HepG2 (cell line): ENCODE measurements at regions of chr17 and their contacts with region 1.

Region 1: DNA sequence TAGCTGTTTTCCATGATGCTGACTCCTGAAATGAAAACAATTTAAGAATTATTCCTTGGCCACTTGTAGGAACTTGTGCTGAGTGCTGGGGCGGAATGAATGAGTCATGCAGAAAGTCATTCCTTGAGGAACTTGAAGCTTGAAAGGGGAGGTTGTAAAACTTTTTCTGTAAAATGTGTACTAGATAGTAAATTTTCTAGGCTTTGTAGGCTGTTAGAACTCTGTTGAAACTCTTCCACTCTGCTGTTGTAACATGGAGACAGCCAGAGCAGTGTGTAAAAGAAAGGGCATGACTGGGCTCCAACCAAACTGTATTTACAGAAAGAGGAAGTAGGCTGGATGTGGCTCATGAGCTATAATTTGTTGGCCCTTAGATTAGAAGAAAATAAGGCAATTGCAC is 46.1 kb downstream of the ABCA8 start:
- DNase-seq: peak; percentile 16
- ATAC-seq: no peak
- H3K4me3 ChIP-seq: no peak overlapping the region
- H3K27ac ChIP-seq: peak overlapping the region; percentile 72
- H3K4me1 ChIP-seq: peaks cover 54% of the 10 kb centered on the region
- H3K27me3 ChIP-seq: no peaks in the 10 kb centered on the region
- CTCF ChIP-seq: no peak
- EP300 ChIP-seq: no peak
- POLR2A ChIP-seq: no peak
- RAD21 ChIP-seq: no peak

Region 2: DNA sequence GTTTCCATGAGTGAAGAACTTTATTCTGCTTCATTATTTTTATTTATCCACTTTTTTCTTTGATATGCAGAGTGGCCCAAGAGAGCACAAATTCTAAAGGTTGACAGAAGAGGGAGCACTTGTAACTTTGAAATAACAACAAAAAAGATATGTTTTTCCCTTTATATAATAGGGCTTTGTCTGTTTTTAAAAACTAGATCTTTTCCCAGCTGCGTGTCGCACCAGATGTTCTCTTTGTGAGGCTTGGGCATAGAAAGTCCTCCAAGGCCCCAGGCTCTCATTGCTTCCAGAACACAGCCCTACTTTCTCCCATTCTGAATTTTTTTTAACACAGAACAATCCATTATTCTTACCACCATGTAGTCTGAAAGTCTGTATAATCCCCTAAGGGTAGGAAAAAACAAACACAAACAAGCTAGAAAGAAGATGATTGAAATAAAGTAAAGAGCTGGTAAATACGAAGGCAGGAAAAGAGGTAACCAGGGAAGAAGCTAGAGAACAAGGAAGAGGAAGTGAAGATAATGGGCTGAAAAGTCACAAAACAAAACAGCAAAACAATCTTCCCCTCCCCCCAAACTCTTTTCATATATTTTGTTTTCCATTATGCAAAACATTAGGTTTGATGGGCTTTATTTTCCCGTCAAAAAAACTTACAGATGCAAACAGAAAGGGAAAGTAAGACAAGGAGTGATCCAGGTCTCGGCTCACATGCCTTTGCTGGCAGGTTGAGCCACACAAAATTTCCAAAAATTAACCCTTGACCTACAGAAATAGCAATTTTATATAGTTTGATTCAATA is 114.2 kb before region 1 on chr17:
- CTCF ChIA-PET with region 1: no interaction called
- POLR2A ChIA-PET with region 1: interaction called, 4 read pairs
- in situ Hi-C with region 1: no loop called
- intact Hi-C with region 1: loop called (anchors 1 kb)
- DNase-seq: peak; percentile 41
- ATAC-seq: no peak; the same call in 2 of the 3 replicates
- H3K4me3 ChIP-seq: no peak overlapping the region
- H3K27ac ChIP-seq: peak overlapping the region; percentile 97
- H3K4me1 ChIP-seq: peaks cover 62% of the 10 kb centered on the region
- H3K27me3 ChIP-seq: no peaks in the 10 kb centered on the region
- CTCF ChIP-seq: no peak
- EP300 ChIP-seq: no peak
- POLR2A ChIP-seq: no peak
- RAD21 ChIP-seq: no peak

Region 3: DNA sequence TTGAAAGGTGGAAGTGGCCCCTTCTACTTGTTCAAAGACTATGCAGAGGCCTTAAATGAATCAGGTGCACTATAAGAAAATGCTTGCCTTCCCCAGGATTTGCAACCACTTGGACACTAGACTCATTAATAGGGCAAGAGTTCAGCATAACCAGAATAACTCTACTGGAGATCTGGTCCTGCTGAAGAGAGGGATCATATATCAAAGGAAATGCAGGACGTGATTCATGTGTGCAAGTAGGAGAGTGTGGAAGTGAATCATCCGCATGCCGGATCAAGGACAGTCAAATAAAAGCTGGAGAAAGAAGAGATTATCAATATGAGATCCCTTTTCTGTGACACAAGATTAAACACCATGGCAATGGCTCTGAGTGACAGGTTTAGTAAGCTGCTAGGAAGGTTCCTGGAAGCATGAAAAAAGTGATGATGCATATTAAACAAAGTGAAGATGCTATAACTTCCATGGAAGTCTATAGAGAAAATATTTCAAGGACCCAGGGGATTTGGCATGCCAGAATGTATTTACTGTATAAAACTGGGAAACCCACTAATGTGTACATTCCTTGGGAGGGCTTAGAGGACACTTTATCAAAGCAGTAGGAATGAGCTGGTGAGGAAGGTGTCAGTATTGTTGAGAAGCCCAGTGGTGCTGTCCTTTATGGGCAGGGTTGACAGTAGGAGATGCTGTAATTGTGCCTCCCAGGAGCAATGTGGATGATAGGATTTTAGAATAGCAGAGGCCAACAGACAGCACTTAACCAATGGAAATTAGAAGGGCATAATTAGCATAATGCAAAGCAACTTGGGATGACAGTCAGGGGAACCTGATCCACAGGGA is 87.0 kb before region 1 on chr17:
- CTCF ChIA-PET with region 1: no interaction called
- POLR2A ChIA-PET with region 1: interaction called, 8 read pairs
- in situ Hi-C with region 1: no loop called
- intact Hi-C with region 1: loop called (anchors 2 kb)
- DNase-seq: peak; percentile 99
- ATAC-seq: peak; percentile 85
- H3K4me3 ChIP-seq: peak overlapping the region in 2 of 3 experiments; percentile 53 to 57; a peak in 3 of 6 replicates
- H3K27ac ChIP-seq: peak overlapping the region; percentile 91
- H3K4me1 ChIP-seq: peaks cover 79% of the 10 kb centered on the region
- H3K27me3 ChIP-seq: no peaks in the 10 kb centered on the region
- CTCF ChIP-seq: no peak
- EP300 ChIP-seq: peak; percentile 81 to 97; a peak in 3 of 4 replicates
- POLR2A ChIP-seq: no peak
- RAD21 ChIP-seq: no peak

Region 4: DNA sequence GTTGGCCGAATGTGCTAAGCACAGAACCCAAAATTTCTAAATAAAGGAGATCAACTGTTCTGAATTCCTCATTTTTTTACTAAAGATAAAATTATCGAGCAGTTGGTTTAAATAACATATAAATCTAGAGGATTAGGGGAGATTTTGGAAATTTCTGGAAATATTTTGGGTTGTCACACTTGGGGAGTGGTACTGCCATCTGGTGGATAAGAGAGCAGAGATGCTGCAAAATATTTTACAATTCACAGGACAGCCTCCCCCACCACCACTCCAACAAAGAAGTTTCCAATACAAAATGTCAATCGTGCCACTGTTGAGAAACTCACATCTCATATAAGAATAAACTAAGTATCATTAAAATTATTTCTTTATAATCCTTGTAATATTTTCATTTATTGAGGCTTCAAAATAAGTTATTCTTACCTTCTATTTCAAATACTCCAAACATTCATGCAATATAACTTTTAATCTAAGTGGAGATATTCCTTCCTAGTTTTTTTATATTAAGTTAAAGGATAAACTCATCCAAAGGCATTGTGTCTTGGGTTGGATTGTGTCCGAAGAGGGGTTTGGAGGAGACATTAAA is 63.1 kb after region 1 on chr17:
- CTCF ChIA-PET with region 1: no interaction called
- POLR2A ChIA-PET with region 1: no interaction called
- in situ Hi-C with region 1: no loop called
- intact Hi-C with region 1: loop called (anchors 2 kb)
- DNase-seq: peak; percentile 43
- ATAC-seq: no peak
- H3K4me3 ChIP-seq: no peak overlapping the region
- H3K27ac ChIP-seq: no peak overlapping the region
- H3K4me1 ChIP-seq: 0 out of 2 replicates have a peak, but pooled peaks cover 10% of the 10 kb centered on the region
- H3K27me3 ChIP-seq: no peaks in the 10 kb centered on the region
- CTCF ChIP-seq: peak; percentile 73
- EP300 ChIP-seq: peak in 1 of 2 experiments; percentile 38; a peak in 1 of 4 replicates
- POLR2A ChIP-seq: no peak
- RAD21 ChIP-seq: peak; percentile 85

Region 5: GRCh38 chr17:69235338-69235930 is 326.4 kb after region 1 on chr17:
- CTCF ChIA-PET with region 1: no interaction called
- POLR2A ChIA-PET with region 1: no interaction called
- in situ Hi-C with region 1: loop called (anchors 5 kb)
- intact Hi-C with region 1: loop called (anchors 2 kb)
- DNase-seq: peak; percentile 88
- ATAC-seq: peak; percentile 100
- H3K4me3 ChIP-seq: no peak overlapping the region
- H3K27ac ChIP-seq: no peak overlapping the region
- H3K4me1 ChIP-seq: peaks cover 14% of the 10 kb centered on the region
- H3K27me3 ChIP-seq: no peaks in the 10 kb centered on the region
- CTCF ChIP-seq: peak; percentile 97
- EP300 ChIP-seq: no peak
- POLR2A ChIP-seq: no peak
- RAD21 ChIP-seq: peak; percentile 98